ENCODE measurements at regions of chr3 and their contacts with region 1.

Region 1: GRCh38 chr3:73633916-73634344 is 9.2 kb upstream of the PDZRN3 start:
- DNase-seq: no peak
- H3K4me3 ChIP-seq: no peak overlapping the region
- H3K27ac ChIP-seq: peak overlapping the region in 2 of 4 donors; percentile 32 to 50
- H3K4me1 ChIP-seq: peaks cover 0 to 14% (median 0%) of the 10 kb centered on the region in 4 donors
- H3K27me3 ChIP-seq: no peaks in the 10 kb centered on the region
- CTCF ChIP-seq: no peak
- EP300 ChIP-seq: no peak
- POLR2A ChIP-seq: no peak

Region 2: GRCh38 chr3:73547427-73548248 is 86.3 kb before region 1 on chr3:
- intact Hi-C with region 1: no loop called
- DNase-seq: no peak
- H3K4me3 ChIP-seq: no peak overlapping the region
- H3K27ac ChIP-seq: peak overlapping the region; percentile 67 to 90 (median 77)
- H3K4me1 ChIP-seq: peaks cover 0 to 99% (median 82%) of the 10 kb centered on the region in 4 donors
- H3K27me3 ChIP-seq: no peaks in the 10 kb centered on the region
- CTCF ChIP-seq: no peak
- EP300 ChIP-seq: no peak
- POLR2A ChIP-seq: no peak

Region 3: GRCh38 chr3:73600293-73600938 is 33.5 kb before region 1 on chr3:
- intact Hi-C with region 1: no loop called
- DNase-seq: no peak
- H3K4me3 ChIP-seq: no peak overlapping the region
- H3K27ac ChIP-seq: peak overlapping the region; percentile 64 to 96 (median 82)
- H3K4me1 ChIP-seq: peaks cover 0 to 97% (median 78%) of the 10 kb centered on the region in 4 donors
- H3K27me3 ChIP-seq: no peaks in the 10 kb centered on the region
- CTCF ChIP-seq: no peak
- EP300 ChIP-seq: peak in 3 of 4 donors; percentile 30 to 86 (median 34)
- POLR2A ChIP-seq: no peak

Region 4: DNA sequence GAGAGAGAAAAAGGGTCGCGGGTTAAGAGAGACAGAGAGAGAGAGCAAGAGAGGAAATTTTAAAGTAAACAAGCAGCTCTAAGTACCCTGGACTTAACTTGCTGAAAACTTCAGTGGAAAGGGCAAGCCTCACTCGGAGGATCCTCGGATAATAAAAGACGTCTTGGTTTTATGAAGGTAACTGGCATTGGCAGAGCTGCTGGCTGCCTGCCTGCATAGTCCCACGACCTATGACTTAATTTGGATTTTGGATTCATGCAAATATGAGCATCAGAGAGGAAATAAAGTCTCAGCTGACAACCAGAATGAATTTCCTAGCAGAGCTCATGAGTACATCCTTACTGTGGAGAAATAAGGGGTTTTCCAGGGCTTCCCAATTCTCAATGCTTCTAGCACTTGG is 85.9 kb after region 1 on chr3:
- intact Hi-C with region 1: loop called (anchors 5 kb)
- DNase-seq: peak; percentile 91
- H3K4me3 ChIP-seq: peak overlapping the region in 3 of 4 donors; percentile 8 to 26 (median 23)
- H3K27ac ChIP-seq: peak overlapping the region; percentile 73 to 85 (median 81)
- H3K4me1 ChIP-seq: peaks cover 0 to 36% (median 21%) of the 10 kb centered on the region in 4 donors
- H3K27me3 ChIP-seq: no peaks in the 10 kb centered on the region
- CTCF ChIP-seq: no peak
- EP300 ChIP-seq: peak in 3 of 4 donors; percentile 40 to 84 (median 55)
- POLR2A ChIP-seq: no peak